Right ventricle myocardium inferior (tissue), 1 donor: ENCODE measurements at regions of chr5 and their contacts with region 1.

Region 1: GRCh38 chr5:126837906-126838539 is 61.1 kb downstream of the LMNB1 start:
- DNase-seq: no peak
- ATAC-seq: no peak

Region 2: GRCh38 chr5:126745259-126745992 is 92.6 kb before region 1 on chr5:
- intact Hi-C with region 1: no loop called
- DNase-seq: no peak
- ATAC-seq: no peak

Region 3: GRCh38 chr5:126801992-126802294 is 36.1 kb before region 1 on chr5:
- intact Hi-C with region 1: no loop called
- DNase-seq: no peak
- ATAC-seq: no peak

Region 4: GRCh38 chr5:127313847-127314473 is 475.9 kb after region 1 on chr5:
- intact Hi-C with region 1: loop called (anchors 2 kb)
- DNase-seq: no peak
- ATAC-seq: no peak

Region 5: DNA sequence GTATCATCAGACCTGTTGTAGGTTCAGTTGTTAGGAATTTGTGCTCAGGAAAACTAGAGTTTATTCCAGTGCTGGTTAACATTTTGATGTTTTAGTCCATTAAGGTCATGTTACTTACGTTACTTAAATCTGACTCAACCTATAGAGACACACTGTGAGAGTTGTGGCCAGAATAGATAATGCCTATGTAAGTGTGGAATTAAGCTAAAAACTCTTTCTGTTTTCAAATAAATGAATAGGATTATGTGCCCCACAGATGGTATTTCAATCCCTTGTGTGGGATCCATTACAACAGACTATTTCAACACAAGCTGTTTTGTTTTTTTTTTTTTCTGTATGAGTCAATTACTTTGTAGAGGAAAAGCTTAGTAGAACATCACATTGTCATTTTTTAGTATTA is 520.7 kb after region 1 on chr5:
- intact Hi-C with region 1: no loop called
- DNase-seq: no peak
- ATAC-seq: no peak

Region 6: GRCh38 chr5:127441799-127442484 is 603.9 kb after region 1 on chr5:
- intact Hi-C with region 1: loop called (anchors 5 kb)
- DNase-seq: no peak
- ATAC-seq: no peak